ENCODE measurements at regions of chr11 and their contacts with region 1.

Region 1: DNA sequence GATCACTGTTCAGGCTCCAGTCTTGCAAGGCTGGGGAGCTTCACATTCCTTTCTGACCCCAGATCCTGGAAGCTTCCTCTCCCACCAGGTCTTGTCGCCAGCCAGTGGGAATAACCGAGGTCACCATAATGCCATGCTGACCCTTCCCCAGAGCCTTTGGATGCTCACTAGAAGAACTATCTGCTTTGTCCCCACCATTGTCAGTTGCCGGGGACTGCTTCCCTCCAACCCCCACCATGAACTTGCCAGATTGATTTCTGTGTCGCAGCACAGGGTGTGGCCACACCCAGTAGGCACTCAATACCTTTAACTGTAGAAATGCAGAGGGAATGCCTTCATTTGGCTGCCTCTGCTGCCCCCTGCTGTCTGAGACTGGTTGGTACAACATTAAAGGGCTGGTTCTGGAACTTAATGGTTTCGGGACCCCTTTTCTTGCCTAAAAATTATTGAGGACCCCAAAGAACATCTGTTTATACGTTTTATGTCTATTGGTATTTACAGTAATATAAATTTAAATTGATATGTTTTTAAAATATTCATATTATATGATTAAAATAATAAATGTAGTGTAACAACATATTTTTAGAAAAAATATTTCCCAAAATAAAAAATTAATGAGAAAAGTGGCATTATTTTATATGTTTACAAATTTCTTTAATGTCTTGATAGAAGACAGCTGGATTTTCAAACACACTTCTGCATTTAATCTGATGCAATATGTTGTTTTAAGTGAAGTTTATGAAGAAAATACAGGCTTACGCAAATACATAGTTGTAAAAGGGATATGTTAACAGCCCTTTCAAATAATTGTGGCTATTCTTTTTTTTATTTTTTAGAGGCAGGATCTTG is 6.7 kb upstream of the GDPD5 start:
- DNase-seq: peak; percentile 70
- CTCF ChIP-seq: peak; percentile 86

Region 2: GRCh38 chr11:75406338-75406777 is 126.1 kb before region 1 on chr11:
- CTCF ChIA-PET with region 1: interaction called, 21 read pairs
- POLR2A ChIA-PET with region 1: no interaction called
- DNase-seq: no peak
- CTCF ChIP-seq: no peak

Region 3: GRCh38 chr11:75465701-75466531 is 66.5 kb before region 1 on chr11:
- CTCF ChIA-PET with region 1: interaction called, 11 read pairs
- POLR2A ChIA-PET with region 1: no interaction called
- DNase-seq: no peak
- CTCF ChIP-seq: no peak

Region 4: GRCh38 chr11:75543806-75544205 is 11.4 kb after region 1 on chr11:
- CTCF ChIA-PET with region 1: interaction called, 10 read pairs
- POLR2A ChIA-PET with region 1: no interaction called
- DNase-seq: no peak
- CTCF ChIP-seq: no peak